ENCODE measurements at regions of chr6 and their contacts with region 1.

Region 1: GRCh38 chr6:37432916-37433656 is at the start of gene CMTR1:
- DNase-seq: peak; percentile 99
- ATAC-seq: peak; percentile 89
- H3K4me3 Mint-ChIP-seq: peak within 1 kb of the TSS; percentile 95
- H3K27ac Mint-ChIP-seq: peak within 1 kb of the TSS; percentile 97
- H3K4me1 Mint-ChIP-seq: peaks cover 34% of the 10 kb centered on the region
- H3K27me3 Mint-ChIP-seq: peaks cover 2% of the 10 kb centered on the region
- CTCF ChIP-seq: no peak
- total RNA-seq, gene CMTR1: 59.0 and 65.7 TPM in 2 replicates

Region 2: DNA sequence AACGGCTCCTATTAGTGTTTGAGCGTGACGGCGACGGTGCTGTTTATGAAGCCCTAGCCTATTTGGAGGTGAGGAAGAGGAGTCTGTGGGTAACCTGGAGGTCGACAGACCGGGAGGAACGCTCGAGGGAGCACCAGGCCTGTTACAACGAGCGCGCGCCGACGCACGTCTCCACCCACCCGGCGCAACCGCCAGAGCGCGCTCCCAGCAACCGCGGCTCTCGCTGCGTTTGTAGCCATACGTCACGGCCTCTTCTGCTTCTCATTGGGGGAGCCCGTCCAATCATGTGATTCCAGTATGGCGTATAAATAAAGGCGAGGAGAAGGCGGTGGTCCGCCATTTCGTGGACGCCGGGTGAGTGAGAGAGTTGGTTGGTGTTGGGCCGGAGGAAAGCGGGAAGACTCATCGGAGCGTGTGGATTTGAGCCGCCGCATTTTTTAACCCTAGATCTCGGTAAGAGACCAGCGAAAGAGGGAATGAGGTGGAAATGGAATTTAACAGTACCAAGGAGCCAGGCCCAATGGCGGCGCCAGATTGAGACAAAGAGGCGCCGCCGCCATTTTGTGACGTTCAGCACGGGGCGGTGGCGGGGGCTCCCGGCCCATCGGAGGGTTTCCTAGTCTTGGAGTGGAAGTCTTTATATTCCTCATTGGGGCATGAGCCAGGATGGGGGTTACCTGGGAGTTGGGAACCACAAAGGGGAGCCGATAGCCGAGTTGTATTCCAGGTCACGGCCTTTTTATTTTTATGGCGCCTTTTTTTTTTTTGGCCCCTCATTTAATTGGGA is 838.9 kb before region 1 on chr6 and contains the start of gene SRSF3:
- CTCF ChIA-PET with region 1: no interaction called
- POLR2A ChIA-PET with region 1: no interaction called
- intact Hi-C with region 1: loop called (anchors 2 kb)
- DNase-seq: peak; percentile 87
- ATAC-seq: peak; percentile 91
- H3K4me3 Mint-ChIP-seq: peak within 1 kb of the TSS; percentile 96
- H3K27ac Mint-ChIP-seq: peak within 1 kb of the TSS; percentile 99
- H3K4me1 Mint-ChIP-seq: peaks cover 51% of the 10 kb centered on the region
- H3K27me3 Mint-ChIP-seq: no peaks in the 10 kb centered on the region
- CTCF ChIP-seq: no peak
- total RNA-seq, gene SRSF3: 421 and 494 TPM in 2 replicates

Region 3: GRCh38 chr6:37324131-37325033 is 108.7 kb before region 1 on chr6:
- CTCF ChIA-PET with region 1: interaction called, 8 read pairs
- POLR2A ChIA-PET with region 1: interaction called, 4 read pairs
- intact Hi-C with region 1: loop called (anchors 1 kb)
- DNase-seq: no peak
- ATAC-seq: no peak
- H3K4me3 Mint-ChIP-seq: no peak overlapping the region
- H3K27ac Mint-ChIP-seq: no peak overlapping the region
- H3K4me1 Mint-ChIP-seq: peaks cover 2% of the 10 kb centered on the region
- H3K27me3 Mint-ChIP-seq: no peaks in the 10 kb centered on the region
- CTCF ChIP-seq: no peak

Region 4: DNA sequence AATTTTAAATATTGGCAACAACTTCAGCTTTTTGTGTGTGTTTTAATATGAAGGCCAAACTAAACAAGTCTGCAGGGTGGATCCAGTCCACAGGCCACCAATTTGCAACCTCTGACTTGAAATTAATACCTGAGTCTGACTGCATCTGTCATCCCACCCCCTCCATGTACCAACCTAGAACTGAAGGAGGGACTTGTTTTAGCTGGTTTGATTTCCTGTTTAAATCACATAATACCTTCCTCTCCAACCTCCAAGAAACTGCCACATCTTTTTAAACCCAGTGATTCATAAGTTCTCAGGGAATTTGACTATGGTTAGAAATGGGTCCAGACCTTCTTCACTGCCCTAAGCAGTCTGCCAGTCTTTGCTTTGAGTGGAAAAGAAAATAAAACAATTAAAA is 57.7 kb before region 1 on chr6:
- CTCF ChIA-PET with region 1: no interaction called
- POLR2A ChIA-PET with region 1: interaction called, 11 read pairs
- intact Hi-C with region 1: loop called (anchors 5 kb)
- DNase-seq: no peak
- ATAC-seq: no peak
- H3K4me3 Mint-ChIP-seq: no peak overlapping the region
- H3K27ac Mint-ChIP-seq: peak overlapping the region; percentile 44
- H3K4me1 Mint-ChIP-seq: peaks cover 42% of the 10 kb centered on the region
- H3K27me3 Mint-ChIP-seq: no peaks in the 10 kb centered on the region
- CTCF ChIP-seq: no peak

Region 5: DNA sequence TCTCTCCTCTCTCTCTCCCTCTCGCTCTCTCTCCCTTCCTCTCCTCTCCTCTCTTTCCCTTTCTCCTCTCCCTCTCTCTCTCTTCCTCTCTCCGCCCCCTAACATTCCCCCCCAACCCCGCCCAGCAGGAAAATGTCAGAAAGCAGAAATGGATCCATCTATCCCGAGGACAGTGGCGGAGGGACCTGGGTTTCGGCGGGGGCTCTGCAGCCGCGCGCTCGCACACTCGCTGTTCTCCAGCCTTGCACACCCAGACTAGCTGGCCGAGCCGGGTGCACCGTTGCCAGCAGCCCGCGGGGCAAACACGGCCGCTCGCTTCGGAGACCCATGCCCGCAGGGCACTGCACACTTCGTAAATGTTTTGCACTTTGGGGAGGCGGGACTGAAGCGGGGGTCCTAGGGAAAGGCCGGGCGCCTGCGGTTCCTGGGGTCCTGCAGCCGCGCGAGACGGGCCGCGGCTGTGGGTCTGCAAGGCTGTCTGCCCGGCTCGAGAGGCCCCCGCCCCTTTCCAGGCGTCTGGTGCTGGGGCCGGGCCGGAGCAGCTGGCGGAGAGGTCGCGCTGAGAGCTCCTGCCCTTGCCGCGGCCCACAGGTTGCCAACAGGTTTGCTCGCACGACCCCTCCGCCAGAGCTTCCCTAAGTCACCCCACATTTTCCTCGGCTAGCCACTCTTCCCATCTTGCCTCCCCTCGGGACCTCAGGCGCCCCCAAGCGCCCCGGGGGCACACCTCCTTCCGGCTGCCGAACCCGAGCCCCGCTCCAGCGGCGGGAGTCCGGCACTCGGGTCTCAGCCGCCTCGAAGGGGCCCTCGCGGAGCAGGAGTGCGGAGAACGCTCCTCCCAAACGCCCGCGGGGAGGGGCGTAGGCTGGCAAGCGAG is 265.4 kb after region 1 on chr6:
- CTCF ChIA-PET with region 1: no interaction called
- POLR2A ChIA-PET with region 1: interaction called, 8 read pairs
- intact Hi-C with region 1: loop called (anchors 5 kb)
- DNase-seq: peak; percentile 58
- ATAC-seq: peak; percentile 41
- H3K4me3 Mint-ChIP-seq: peak overlapping the region; percentile 97
- H3K27ac Mint-ChIP-seq: peak overlapping the region; percentile 93
- H3K4me1 Mint-ChIP-seq: peaks cover 19% of the 10 kb centered on the region
- H3K27me3 Mint-ChIP-seq: peaks cover 15% of the 10 kb centered on the region
- CTCF ChIP-seq: no peak

Measured in activated B cell treated with CpG ODN at 0.5 μM for 24 hours (primary cell).